ENCODE measurements at regions of chr19 and their contacts with region 1.

Region 1: DNA sequence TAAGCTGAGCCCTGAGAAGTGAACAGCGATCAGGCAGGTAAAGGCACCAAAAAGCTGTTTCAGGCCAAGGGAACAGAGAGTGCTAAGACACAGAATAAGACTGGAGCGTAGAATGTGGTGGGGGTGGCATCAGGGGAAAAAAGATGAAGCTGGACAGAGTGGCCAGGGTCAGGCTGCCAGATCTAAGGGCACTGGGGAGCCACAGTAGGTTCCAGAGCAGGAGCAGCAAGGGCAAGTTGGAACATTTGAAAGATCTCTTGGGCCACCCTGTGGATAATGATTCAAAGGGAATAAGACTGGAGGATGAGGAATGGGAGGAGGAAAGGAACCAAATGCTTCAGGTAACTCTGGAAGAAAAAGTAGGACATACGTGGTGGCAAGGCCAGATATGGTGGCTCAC is 6.5 kb upstream of the PLIN3 start:
- DNase-seq: no peak
- ATAC-seq: no peak
- H3K4me3 ChIP-seq: no peak overlapping the region
- H3K27ac ChIP-seq: no peak overlapping the region
- H3K4me1 ChIP-seq: peaks cover 13% of the 10 kb centered on the region
- H3K27me3 ChIP-seq: no peaks in the 10 kb centered on the region
- CTCF ChIP-seq: no peak

Region 2: DNA sequence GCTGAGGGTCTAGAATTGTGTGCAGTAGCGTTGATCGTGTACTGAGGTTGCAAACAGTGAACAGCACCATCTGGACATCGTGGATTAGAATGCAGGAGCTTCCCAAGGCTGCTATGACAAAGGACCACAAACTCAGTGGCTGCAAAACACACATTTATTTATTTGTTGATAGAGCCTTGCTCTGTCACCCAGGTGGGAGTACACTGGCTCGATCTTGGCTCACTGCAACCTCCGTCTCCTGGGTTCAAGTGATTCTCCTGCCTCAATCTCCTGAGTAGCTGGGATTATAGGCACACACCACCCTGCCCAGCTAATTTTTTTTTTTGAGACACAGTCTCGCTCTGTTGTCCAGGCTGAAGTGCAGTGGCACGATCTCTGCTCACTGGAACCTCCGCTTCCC is 33.0 kb after region 1 on chr19:
- CTCF ChIA-PET with region 1: interaction called, 40 read pairs
- POLR2A ChIA-PET with region 1: interaction called, 6 read pairs
- intact Hi-C with region 1: loop called (anchors 1 kb)
- DNase-seq: no peak
- ATAC-seq: no peak
- H3K4me3 ChIP-seq: no peak overlapping the region
- H3K27ac ChIP-seq: no peak overlapping the region
- H3K4me1 ChIP-seq: peaks cover 19% of the 10 kb centered on the region
- H3K27me3 ChIP-seq: no peaks in the 10 kb centered on the region
- CTCF ChIP-seq: 0 out of 2 replicates have a peak, but pooled peaks have one; percentile 15

Region 3: GRCh38 chr19:4911786-4912672 is 38.1 kb after region 1 on chr19:
- CTCF ChIA-PET with region 1: interaction called, 40 read pairs
- POLR2A ChIA-PET with region 1: interaction called, 6 read pairs
- intact Hi-C with region 1: loop called (anchors 1 kb)
- DNase-seq: peak; percentile 99
- ATAC-seq: peak; percentile 59
- H3K4me3 ChIP-seq: peak overlapping the region; percentile 78
- H3K27ac ChIP-seq: peak overlapping the region; percentile 81
- H3K4me1 ChIP-seq: peaks cover 59% of the 10 kb centered on the region
- H3K27me3 ChIP-seq: no peaks in the 10 kb centered on the region
- CTCF ChIP-seq: peak; percentile 88

Region 4: GRCh38 chr19:4976401-4977298 is 102.7 kb after region 1 on chr19:
- CTCF ChIA-PET with region 1: no interaction called
- POLR2A ChIA-PET with region 1: no interaction called
- intact Hi-C with region 1: loop called (anchors 2 kb)
- DNase-seq: peak; percentile 89
- ATAC-seq: peak; percentile 53
- H3K4me3 ChIP-seq: peak overlapping the region; percentile 5; the same call in 1 of the 2 replicates
- H3K27ac ChIP-seq: peak overlapping the region; percentile 35
- H3K4me1 ChIP-seq: peaks cover 41% of the 10 kb centered on the region
- H3K27me3 ChIP-seq: no peaks in the 10 kb centered on the region
- CTCF ChIP-seq: peak; percentile 84